Activated T-helper 2 cell treated with anti-CD3 and anti-CD28 coated beads, Interferon-gamma antibody, Interleukin-2, Interleukin-4, amounts not matched to agents 10 μg/mL and 5 μg/mL and 100 μg/mL, durations not matched to agents 14 hours and 24 hours and 36 hours (primary cell): ENCODE measurements at regions of chr3 and their contacts with region 1.

Region 1: GRCh38 chr3:189304446-189305351 is 132.9 kb downstream of the TPRG1 start:
- DNase-seq: no peak
- H3K4me3 Mint-ChIP-seq: peak overlapping the region; percentile 71
- H3K27ac Mint-ChIP-seq: peak overlapping the region; percentile 98
- H3K4me1 Mint-ChIP-seq: peaks cover 75% of the 10 kb centered on the region
- H3K27me3 Mint-ChIP-seq: no peaks in the 10 kb centered on the region

Region 2: DNA sequence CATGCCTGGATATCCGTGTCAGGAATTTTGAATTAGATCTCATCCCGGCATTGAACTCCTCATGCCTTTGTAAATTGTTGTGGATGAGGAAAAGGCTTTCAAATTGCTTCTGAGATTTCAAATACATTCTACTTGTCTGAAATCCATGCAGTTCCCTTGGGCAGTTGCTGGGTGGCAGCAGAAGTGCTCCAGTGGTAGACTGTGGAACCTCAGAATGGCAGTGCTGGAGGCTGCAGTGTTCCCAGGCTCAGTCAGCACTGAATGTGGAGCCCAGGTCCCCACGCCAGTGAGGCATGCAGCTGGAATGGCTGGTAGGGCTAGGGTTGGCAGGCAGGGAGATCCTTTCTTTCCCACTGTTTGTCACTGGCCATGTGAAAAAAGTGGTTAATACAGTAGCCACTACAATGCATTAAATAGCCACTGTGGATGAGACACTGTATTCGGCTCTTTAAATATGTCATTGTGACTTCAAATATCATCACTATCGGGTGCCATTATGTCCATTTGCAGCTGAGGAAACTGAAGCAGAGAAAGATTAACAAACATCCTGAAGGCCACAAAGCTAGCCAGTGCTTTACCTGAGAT is 34.4 kb before region 1 on chr3:
- intact Hi-C with region 1: loop called (anchors 2 kb)
- DNase-seq: peak; percentile 33
- H3K4me3 Mint-ChIP-seq: no peak overlapping the region
- H3K27ac Mint-ChIP-seq: no peak overlapping the region
- H3K4me1 Mint-ChIP-seq: peaks cover 33% of the 10 kb centered on the region
- H3K27me3 Mint-ChIP-seq: no peaks in the 10 kb centered on the region

Region 3: GRCh38 chr3:189334064-189334920 is 29.6 kb after region 1 on chr3:
- intact Hi-C with region 1: loop called (anchors 1 kb)
- DNase-seq: no peak
- H3K4me3 Mint-ChIP-seq: no peak overlapping the region
- H3K27ac Mint-ChIP-seq: peak overlapping the region; percentile 68
- H3K4me1 Mint-ChIP-seq: peaks cover 58% of the 10 kb centered on the region
- H3K27me3 Mint-ChIP-seq: no peaks in the 10 kb centered on the region

Region 4: GRCh38 chr3:189530822-189531221 is 226.1 kb after region 1 on chr3:
- intact Hi-C with region 1: loop called (anchors 1 kb)
- DNase-seq: no peak
- H3K4me3 Mint-ChIP-seq: peak overlapping the region; percentile 41
- H3K27ac Mint-ChIP-seq: peak overlapping the region; percentile 87
- H3K4me1 Mint-ChIP-seq: peaks cover 33% of the 10 kb centered on the region
- H3K27me3 Mint-ChIP-seq: no peaks in the 10 kb centered on the region

Region 5: GRCh38 chr3:189685854-189686253 is 381.2 kb after region 1 on chr3:
- intact Hi-C with region 1: loop called (anchors 10 kb)
- DNase-seq: no peak
- H3K4me3 Mint-ChIP-seq: no peak overlapping the region
- H3K27ac Mint-ChIP-seq: peak overlapping the region; percentile 51
- H3K4me1 Mint-ChIP-seq: peaks cover 43% of the 10 kb centered on the region
- H3K27me3 Mint-ChIP-seq: no peaks in the 10 kb centered on the region